ENCODE measurements at regions of chr2 and their contacts with region 1.

Region 1: DNA sequence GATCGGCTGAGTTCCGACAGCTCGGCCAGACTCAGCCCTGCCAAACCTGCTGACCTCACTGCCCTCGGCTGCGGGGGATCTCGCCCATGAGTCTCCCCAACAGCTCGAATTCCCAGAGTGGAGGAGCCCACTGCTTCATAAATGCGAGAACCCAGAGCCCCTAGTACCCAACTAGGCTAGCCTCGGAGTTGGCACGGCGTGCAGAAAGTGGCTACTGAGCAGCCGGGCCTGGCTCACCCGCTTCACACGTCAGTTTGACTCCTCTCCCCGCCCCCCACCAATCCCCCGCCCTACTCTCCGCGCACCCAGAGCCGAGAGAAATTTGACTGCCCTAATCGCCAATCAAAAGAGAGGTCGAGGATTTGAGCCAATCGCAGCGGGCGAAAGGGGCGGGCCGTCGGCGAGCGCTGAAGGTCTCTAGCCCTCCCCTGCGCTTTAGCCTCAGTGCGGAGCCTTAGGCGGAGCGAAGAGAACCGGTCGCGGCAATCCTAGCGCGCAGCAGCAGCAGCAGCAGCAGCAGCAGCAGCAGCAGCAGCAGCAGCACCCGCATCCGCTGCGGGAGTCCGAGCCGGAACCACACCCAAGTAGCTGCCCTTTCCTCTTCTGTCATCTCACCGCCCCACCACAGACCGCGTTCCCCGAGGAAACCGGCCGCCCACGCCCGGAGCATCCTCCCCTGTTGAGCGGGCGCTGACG is at the start of gene GLS:
- DNase-seq: peak; percentile 99
- H3K4me3 ChIP-seq: peak within 1 kb of the TSS; percentile 90
- H3K27ac ChIP-seq: peak within 1 kb of the TSS; percentile 85
- H3K4me1 ChIP-seq: peaks cover 32% of the 10 kb centered on the region
- H3K27me3 ChIP-seq: no peaks in the 10 kb centered on the region
- CTCF ChIP-seq: no peak
- total RNA-seq, gene GLS: 99.5 and 116 TPM in 2 replicates

Region 2: DNA sequence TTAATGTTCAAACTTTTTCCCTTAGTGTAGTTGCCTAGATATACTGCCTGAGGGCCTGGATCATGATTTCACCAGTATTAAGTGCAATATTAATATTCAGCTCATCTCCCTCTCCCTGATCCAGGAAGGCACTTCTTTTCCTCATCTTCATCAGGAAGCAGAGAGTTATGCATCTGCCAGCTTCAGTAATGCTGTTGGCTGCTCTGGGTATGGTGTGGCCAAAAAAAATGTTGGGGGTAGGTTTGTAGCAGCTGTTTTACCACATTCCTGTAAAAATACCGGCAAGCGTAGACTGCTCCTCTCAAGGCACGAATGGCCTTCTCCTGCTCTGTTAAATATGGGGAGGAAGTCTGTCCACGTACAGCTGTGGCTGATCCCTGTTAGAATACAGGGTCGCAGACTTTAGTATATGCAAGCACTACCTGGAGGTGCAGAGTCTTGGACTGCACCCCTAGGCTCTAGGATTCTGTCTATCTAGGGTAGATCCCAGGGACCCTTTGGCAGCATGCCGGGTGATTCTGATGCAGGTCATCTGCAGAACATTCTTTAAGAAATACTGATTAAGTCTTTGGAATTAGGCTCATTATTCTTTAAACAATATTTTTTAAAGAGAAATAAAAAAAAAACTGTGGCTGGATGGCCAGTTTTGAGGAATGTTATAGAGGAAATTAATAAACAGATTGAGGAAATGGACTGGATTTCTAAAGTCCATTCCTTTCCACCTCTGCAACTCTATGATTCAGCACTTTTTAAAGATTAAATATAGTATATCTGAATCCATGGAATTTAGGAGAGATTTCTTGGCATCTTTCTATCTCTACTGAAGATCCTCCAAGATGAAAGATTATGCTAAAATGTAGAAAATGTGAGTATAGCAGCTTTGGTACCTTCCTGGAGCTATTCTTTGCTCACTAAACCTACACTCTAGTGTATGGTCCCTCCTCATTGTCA is 20.9 kb before region 1 on chr2:
- CTCF ChIA-PET with region 1: no interaction called
- POLR2A ChIA-PET with region 1: no interaction called
- intact Hi-C with region 1: loop called (anchors 2 kb)
- DNase-seq: no peak
- H3K4me3 ChIP-seq: no peak overlapping the region
- H3K27ac ChIP-seq: peak overlapping the region; percentile 35
- H3K4me1 ChIP-seq: peaks cover 30% of the 10 kb centered on the region
- H3K27me3 ChIP-seq: no peaks in the 10 kb centered on the region
- CTCF ChIP-seq: no peak

Measured in A673 (cell line).